K562 (cell line): ENCODE measurements at regions of chr20 and their contacts with region 1.

Region 1: DNA sequence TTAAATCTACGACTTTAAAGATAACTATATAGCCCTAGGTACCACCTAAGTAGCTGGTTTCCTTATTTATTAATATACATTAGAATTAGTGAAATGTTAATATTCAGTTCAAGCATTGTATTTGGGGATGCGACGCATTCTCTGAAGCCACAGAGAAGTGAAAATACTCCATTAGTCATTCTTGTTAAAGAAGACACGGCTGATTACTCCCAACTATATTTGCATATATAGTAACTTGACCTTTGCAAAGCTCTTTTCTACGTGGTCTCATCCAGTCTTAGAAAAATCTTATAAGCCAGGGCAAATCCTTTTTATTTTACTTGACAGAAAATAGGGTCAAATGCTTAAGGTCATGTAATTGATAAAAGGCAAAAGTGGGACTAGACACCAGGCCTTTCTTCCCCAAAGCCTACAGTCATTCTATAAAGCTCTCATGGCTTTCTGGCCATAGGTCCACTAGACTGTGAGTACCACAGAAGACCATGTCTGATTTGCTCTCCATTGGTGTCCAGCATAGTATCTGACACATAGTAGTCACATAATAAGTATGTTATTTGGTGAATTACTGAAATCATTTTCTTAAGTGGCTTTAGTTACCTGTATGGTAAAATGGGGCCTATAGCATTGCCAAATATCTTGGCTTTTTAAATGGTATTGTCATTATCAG is 11.3 kb downstream of the ZHX3 start:
- DNase-seq: no peak
- ATAC-seq: no peak
- H3K4me3 ChIP-seq: no peak overlapping the region
- H3K27ac ChIP-seq: no peak overlapping the region
- H3K4me1 ChIP-seq: peaks cover 7 to 27% of the 10 kb centered on the region in 2 experiments
- H3K27me3 ChIP-seq: no peaks in the 10 kb centered on the region
- CTCF ChIP-seq: no peak
- EP300 ChIP-seq: no peak
- POLR2A ChIP-seq: no peak
- RAD21 ChIP-seq: no peak

Region 2: DNA sequence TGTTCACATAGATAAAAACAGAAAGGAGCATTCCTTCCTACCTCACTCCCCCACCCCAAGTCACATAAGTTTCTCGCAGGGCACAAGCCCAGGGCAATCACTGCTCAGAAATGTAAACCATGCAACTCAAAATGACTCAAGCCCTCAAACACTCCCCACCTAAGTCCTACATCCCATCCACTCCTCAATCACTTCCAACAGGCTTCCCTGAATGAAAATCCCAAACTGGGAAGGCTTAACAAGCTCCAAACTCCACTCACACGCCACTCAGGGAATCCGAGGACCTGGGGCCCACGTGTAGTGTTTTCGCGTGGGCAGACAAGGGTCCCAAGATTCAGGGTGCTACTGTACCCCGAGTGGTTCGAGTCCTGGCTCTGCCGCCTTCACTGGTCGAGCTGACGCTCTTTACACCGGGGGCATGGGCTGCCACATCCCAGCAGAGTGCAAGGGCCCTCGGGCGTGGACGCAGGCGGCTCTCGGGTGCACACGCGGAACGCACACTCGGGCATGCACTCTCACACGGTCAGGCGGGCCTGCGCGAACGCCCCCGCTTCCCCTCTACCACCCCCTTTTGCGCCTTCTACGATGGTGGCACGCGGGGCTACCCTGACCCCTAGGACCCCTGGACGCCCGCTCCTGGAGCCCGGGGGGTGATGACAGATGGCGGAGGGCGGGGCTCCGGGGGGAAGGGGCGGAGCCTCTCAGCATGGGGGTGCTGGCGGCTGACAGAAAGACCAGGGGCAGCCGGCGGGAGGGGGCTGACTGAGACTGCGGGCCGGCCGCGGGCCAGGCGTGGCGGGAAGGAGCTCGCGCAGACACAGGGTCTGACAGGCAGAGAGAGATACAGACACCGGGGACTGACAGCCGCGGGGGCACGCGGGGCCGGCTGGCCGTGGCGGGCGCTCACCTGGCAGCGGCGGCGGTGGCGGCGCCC is 10.7 kb after region 1 on chr20:
- CTCF ChIA-PET with region 1: no interaction called
- POLR2A ChIA-PET with region 1: interaction called, 10 read pairs
- in situ Hi-C with region 1: no loop called
- intact Hi-C with region 1: no loop called
- DNase-seq: peak; percentile 80 to 95 (median 92)
- ATAC-seq: peak; percentile 70
- H3K4me3 ChIP-seq: peak overlapping the region; percentile 93
- H3K27ac ChIP-seq: peak overlapping the region; percentile 60
- H3K4me1 ChIP-seq: peaks cover 5 to 17% of the 10 kb centered on the region in 2 experiments; a peak in 4 of 5 replicates
- H3K27me3 ChIP-seq: no peaks in the 10 kb centered on the region
- CTCF ChIP-seq: no peak
- EP300 ChIP-seq: no peak
- POLR2A ChIP-seq: no peak; the same call in 1 of the 2 replicates
- RAD21 ChIP-seq: no peak